ENCODE measurements at regions of chr6 and their contacts with region 1.

Region 1: DNA sequence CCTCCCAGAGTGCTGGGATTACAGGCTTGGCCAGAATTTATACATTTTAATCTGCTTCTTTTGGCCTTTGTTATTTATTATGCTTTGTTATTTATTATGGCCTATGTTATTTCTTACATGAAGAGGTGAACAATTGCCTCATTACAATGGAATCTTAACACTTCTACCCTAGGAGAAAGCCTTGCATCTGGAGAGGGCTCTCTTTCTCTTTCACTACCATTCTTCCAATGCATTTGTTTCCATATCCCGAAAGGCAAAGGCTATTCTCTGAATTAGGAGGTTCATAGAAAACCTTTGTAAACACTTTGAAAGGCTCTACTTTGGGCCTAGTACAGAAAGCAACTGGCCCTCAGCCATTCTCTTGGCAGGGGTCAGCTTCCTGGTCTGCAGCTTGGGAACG is 19.9 kb upstream of the DEK start:
- DNase-seq: no peak
- ATAC-seq: no peak
- H3K4me3 ChIP-seq: no peak overlapping the region
- H3K27ac ChIP-seq: no peak overlapping the region
- H3K4me1 ChIP-seq: no peaks in the 10 kb centered on the region
- H3K27me3 ChIP-seq: peaks cover 7% of the 10 kb centered on the region; the same call in 1 of the 2 replicates
- CTCF ChIP-seq: no peak

Region 2: GRCh38 chr6:17574866-17575560 is 709.2 kb before region 1 on chr6:
- CTCF ChIA-PET with region 1: no interaction called
- POLR2A ChIA-PET with region 1: no interaction called
- in situ Hi-C with region 1: no loop called
- intact Hi-C with region 1: no loop called
- DNase-seq: no peak
- ATAC-seq: no peak
- H3K4me3 ChIP-seq: no peak overlapping the region
- H3K27ac ChIP-seq: no peak overlapping the region
- H3K4me1 ChIP-seq: no peaks in the 10 kb centered on the region
- H3K27me3 ChIP-seq: no peaks in the 10 kb centered on the region
- CTCF ChIP-seq: no peak

Region 3: DNA sequence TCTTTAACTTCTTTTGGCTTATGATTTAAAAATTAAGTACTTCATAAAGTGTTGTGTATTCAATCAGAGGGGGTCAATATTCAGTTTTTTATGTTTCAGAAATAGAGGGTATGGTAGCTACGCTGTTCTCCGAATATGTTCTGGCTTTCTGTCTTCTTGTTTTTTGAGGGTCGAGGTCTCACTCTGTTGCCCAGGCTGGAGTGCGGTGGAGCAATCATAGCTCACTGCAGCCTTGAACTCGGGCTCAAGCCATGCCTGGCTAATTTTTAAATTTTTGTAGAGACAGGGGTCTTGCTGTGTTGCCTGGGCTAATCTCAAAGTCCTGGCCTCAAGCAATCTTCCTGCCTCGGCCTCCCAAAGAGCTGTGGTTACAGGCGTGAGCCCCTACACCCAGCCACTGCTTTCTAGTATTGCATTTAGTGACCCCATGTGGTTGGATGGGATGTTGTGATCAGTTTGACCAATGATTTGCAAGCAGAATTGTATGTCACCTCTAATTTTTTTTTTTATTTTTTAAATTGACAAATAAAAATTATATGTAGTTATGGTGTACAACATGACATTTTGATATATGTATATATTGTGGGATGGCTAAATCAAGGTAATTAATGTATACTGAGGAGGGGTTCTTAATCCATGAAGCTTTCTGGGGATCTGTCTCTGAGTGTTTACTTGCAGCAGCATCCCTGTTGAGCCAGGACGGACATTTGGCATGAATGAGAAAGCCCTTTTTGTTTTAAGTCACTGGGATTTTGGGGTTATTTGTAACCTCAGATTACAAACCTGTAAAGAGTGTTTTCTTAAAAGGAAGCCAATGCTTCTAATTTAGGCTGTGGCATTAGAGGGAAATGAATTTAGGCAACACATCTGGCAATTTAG is 18.5 kb after region 1 on chr6:
- CTCF ChIA-PET with region 1: no interaction called
- POLR2A ChIA-PET with region 1: interaction called, 14 read pairs
- in situ Hi-C with region 1: no loop called
- intact Hi-C with region 1: no loop called
- DNase-seq: no peak
- ATAC-seq: no peak
- H3K4me3 ChIP-seq: no peak overlapping the region
- H3K27ac ChIP-seq: no peak overlapping the region
- H3K4me1 ChIP-seq: no peaks in the 10 kb centered on the region
- H3K27me3 ChIP-seq: no peaks in the 10 kb centered on the region
- CTCF ChIP-seq: no peak

Measured in Panc1 (cell line).